ENCODE measurements at regions of chr6 and their contacts with region 1.

Region 1: GRCh38 chr6:53359072-53359842 is 10.5 kb upstream of the ELOVL5 start:
- DNase-seq: peak; percentile 91
- H3K4me3 Mint-ChIP-seq: peak overlapping the region; percentile 81
- H3K27ac Mint-ChIP-seq: peak overlapping the region; percentile 99
- H3K4me1 Mint-ChIP-seq: peaks cover 54% of the 10 kb centered on the region
- H3K27me3 Mint-ChIP-seq: peaks cover 6% of the 10 kb centered on the region

Region 2: DNA sequence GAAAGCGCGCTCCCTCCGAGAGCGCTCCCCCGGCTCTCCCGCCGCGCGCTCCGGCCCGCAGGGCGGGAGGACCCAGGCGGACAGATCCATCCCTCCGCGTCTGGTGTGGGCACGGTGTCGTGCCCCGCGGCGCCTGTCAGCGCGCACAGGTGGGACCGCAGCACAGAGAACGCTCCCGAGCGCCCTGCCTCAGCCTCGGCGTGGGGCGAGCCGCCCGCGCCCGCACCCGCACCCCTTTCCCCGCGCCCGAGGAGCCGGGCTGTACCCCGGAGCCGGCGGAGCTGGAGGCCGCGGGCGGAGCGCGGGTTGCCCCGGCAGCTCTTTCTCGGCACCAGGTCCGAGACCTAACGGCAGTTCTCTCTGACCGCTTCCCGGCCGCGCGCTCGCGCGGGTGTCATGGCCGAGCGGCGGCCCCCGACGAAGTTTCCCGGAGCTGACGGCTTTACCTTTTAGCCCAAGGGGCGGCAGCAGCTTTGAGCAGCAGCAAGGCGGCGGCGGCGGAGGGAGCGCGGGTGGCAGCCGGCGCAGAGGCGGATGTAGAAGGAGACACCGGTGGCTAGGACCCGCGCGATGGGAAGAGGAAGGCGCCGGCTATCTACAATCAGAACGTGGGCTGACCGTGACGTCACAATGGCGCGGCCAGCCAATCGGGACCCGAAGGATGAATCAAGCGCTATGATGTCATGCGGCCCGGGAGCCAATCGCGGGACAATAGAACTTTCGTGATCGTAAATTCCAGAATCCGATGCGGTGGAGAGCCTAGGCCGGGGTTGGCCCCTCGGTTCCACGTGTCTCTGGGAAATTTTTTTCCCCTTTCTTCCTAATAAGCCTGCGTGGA is 10.7 kb before region 1 on chr6 and contains the start of gene ELOVL5:
- CTCF ChIA-PET with region 1: interaction called, 9 read pairs
- POLR2A ChIA-PET with region 1: interaction called, 10 read pairs
- DNase-seq: peak; percentile 97
- H3K4me3 Mint-ChIP-seq: peak within 1 kb of the TSS; percentile 97
- H3K27ac Mint-ChIP-seq: peak within 1 kb of the TSS; percentile 96
- H3K4me1 Mint-ChIP-seq: peaks cover 51% of the 10 kb centered on the region
- H3K27me3 Mint-ChIP-seq: peaks cover 20% of the 10 kb centered on the region
- total RNA-seq, gene ELOVL5: 124 to 152 TPM

Measured in activated CD4-positive, alpha-beta T cell treated with anti-CD3 and anti-CD28 coated beads, Interleukin-2, amount 10 ng/mL, durations not matched to agents 7 days and 5 days (primary cell).